ENCODE measurements at regions of chr1 and their contacts with region 1.

Region 1: GRCh38 chr1:119808972-119809550 is 2.2 kb downstream of the REG4 start:
- DNase-seq: peak; percentile 36 to 82 (median 59)
- ATAC-seq: peak; percentile 83
- H3K4me3 ChIP-seq: no peak overlapping the region
- H3K4me3 Mint-ChIP-seq: no peak overlapping the region
- H3K27ac ChIP-seq: no peak overlapping the region
- H3K27ac Mint-ChIP-seq: no peak overlapping the region
- H3K4me1 ChIP-seq: no peaks in the 10 kb centered on the region
- H3K4me1 Mint-ChIP-seq: peaks cover 6% of the 10 kb centered on the region
- H3K27me3 ChIP-seq: peaks cover 5 to 20% of the 10 kb centered on the region in 2 experiments
- H3K27me3 Mint-ChIP-seq: peaks cover 20% of the 10 kb centered on the region
- CTCF ChIP-seq: peak; percentile 88

Region 2: GRCh38 chr1:119298687-119299303 is 510.3 kb before region 1 on chr1:
- CTCF ChIA-PET with region 1: no interaction called
- POLR2A ChIA-PET with region 1: no interaction called
- intact Hi-C with region 1: no loop called
- DNase-seq: peak in 3 of 14 experiments; percentile 15 to 25 (median 16)
- ATAC-seq: no peak
- H3K4me3 ChIP-seq: no peak overlapping the region
- H3K4me3 Mint-ChIP-seq: no peak overlapping the region
- H3K27ac ChIP-seq: no peak overlapping the region
- H3K27ac Mint-ChIP-seq: no peak overlapping the region
- H3K4me1 ChIP-seq: peaks cover 10% of the 10 kb centered on the region
- H3K4me1 Mint-ChIP-seq: peaks cover 25% of the 10 kb centered on the region
- H3K27me3 ChIP-seq: peaks cover 20 to 35% of the 10 kb centered on the region in 2 experiments
- H3K27me3 Mint-ChIP-seq: peaks cover 73% of the 10 kb centered on the region
- CTCF ChIP-seq: no peak

Region 3: DNA sequence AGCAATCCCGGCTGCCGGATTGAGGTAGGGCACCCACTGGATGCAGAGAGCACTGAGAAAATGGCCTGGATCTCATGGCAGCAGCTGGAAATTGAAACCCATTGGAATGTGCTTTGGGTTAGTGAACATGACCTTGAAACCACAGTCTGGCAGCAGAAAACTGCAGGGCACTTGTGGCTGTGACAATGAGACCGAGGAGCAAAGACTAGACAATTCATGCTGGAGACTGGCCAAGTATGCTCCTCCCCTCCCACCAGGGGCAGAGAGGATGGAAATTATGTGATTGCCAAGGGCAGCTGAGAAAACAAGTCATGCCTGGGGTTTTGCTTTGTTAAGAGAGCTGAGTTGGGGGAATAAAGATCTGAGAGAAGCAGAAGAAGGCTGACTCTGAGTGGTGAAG is 221.7 kb before region 1 on chr1:
- CTCF ChIA-PET with region 1: no interaction called
- POLR2A ChIA-PET with region 1: no interaction called
- intact Hi-C with region 1: no loop called
- DNase-seq: no peak
- ATAC-seq: no peak
- H3K4me3 ChIP-seq: no peak overlapping the region
- H3K4me3 Mint-ChIP-seq: no peak overlapping the region
- H3K27ac ChIP-seq: no peak overlapping the region
- H3K27ac Mint-ChIP-seq: no peak overlapping the region
- H3K4me1 ChIP-seq: no peaks in the 10 kb centered on the region
- H3K4me1 Mint-ChIP-seq: no peaks in the 10 kb centered on the region
- H3K27me3 ChIP-seq: peaks cover 0 to 2% of the 10 kb centered on the region in 2 experiments
- H3K27me3 Mint-ChIP-seq: peaks cover 6% of the 10 kb centered on the region
- CTCF ChIP-seq: no peak

Region 4: GRCh38 chr1:119688810-119689209 is 120.3 kb before region 1 on chr1:
- CTCF ChIA-PET with region 1: no interaction called
- POLR2A ChIA-PET with region 1: no interaction called
- intact Hi-C with region 1: no loop called
- DNase-seq: no peak
- ATAC-seq: no peak
- H3K4me3 ChIP-seq: no peak overlapping the region
- H3K4me3 Mint-ChIP-seq: no peak overlapping the region
- H3K27ac ChIP-seq: no peak overlapping the region
- H3K27ac Mint-ChIP-seq: no peak overlapping the region
- H3K4me1 ChIP-seq: no peaks in the 10 kb centered on the region
- H3K4me1 Mint-ChIP-seq: no peaks in the 10 kb centered on the region
- H3K27me3 ChIP-seq: no peaks in the 10 kb centered on the region
- H3K27me3 Mint-ChIP-seq: peaks cover 5% of the 10 kb centered on the region
- CTCF ChIP-seq: no peak

Region 5: GRCh38 chr1:119727996-119728395 is 81.1 kb before region 1 on chr1:
- CTCF ChIA-PET with region 1: no interaction called
- POLR2A ChIA-PET with region 1: no interaction called
- intact Hi-C with region 1: no loop called
- DNase-seq: no peak
- ATAC-seq: no peak
- H3K4me3 ChIP-seq: no peak overlapping the region
- H3K4me3 Mint-ChIP-seq: no peak overlapping the region
- H3K27ac ChIP-seq: no peak overlapping the region
- H3K27ac Mint-ChIP-seq: no peak overlapping the region
- H3K4me1 ChIP-seq: no peaks in the 10 kb centered on the region
- H3K4me1 Mint-ChIP-seq: peaks cover 8% of the 10 kb centered on the region
- H3K27me3 ChIP-seq: no peaks in the 10 kb centered on the region
- H3K27me3 Mint-ChIP-seq: no peaks in the 10 kb centered on the region
- CTCF ChIP-seq: no peak

Region 6: GRCh38 chr1:119968068-119968492 is 159.0 kb after region 1 on chr1:
- CTCF ChIA-PET with region 1: no interaction called
- POLR2A ChIA-PET with region 1: no interaction called
- intact Hi-C with region 1: loop called in 1 of 2 experiments (anchors 5 kb)
- DNase-seq: peak; percentile 55 to 83 (median 70)
- ATAC-seq: peak; percentile 99
- H3K4me3 ChIP-seq: no peak overlapping the region
- H3K4me3 Mint-ChIP-seq: no peak overlapping the region
- H3K27ac ChIP-seq: no peak overlapping the region
- H3K27ac Mint-ChIP-seq: peak overlapping the region; percentile 16
- H3K4me1 ChIP-seq: no peaks in the 10 kb centered on the region
- H3K4me1 Mint-ChIP-seq: peaks cover 3% of the 10 kb centered on the region
- H3K27me3 ChIP-seq: no peaks in the 10 kb centered on the region
- H3K27me3 Mint-ChIP-seq: no peaks in the 10 kb centered on the region
- CTCF ChIP-seq: peak; percentile 94